GM18951 (cell line): ENCODE measurements at regions of chr4 and their contacts with region 1.

Region 1: GRCh38 chr4:40309250-40309774 is 25.8 kb upstream of the CHRNA9 start:
- POLR2A ChIP-seq: peak; percentile 22

Region 2: GRCh38 chr4:40070387-40070786 is 238.9 kb before region 1 on chr4:
- in situ Hi-C with region 1: no loop called
- POLR2A ChIP-seq: no peak

Region 3: GRCh38 chr4:40199999-40200874 is 109.1 kb before region 1 on chr4:
- in situ Hi-C with region 1: loop called (anchors 25 kb)
- POLR2A ChIP-seq: peak; percentile 62

Region 4: GRCh38 chr4:40438384-40439026 is 129.2 kb after region 1 on chr4:
- in situ Hi-C with region 1: no loop called
- POLR2A ChIP-seq: no peak